ENCODE measurements at regions of chr17 and their contacts with region 1.

Region 1: GRCh38 chr17:77869665-77870132 is 88.8 kb upstream of the TNRC6C start:
- DNase-seq: peak; percentile 97
- ATAC-seq: peak; percentile 94
- H3K4me3 ChIP-seq: peak overlapping the region; percentile 20 to 38 (median 27)
- H3K4me3 Mint-ChIP-seq: peak overlapping the region; percentile 69
- H3K27ac ChIP-seq: peak overlapping the region; percentile 52 to 77
- H3K27ac Mint-ChIP-seq: peak overlapping the region; percentile 83
- H3K4me1 ChIP-seq: peaks cover 48 to 63% of the 10 kb centered on the region in 2 donors
- H3K4me1 Mint-ChIP-seq: peaks cover 66% of the 10 kb centered on the region
- H3K27me3 ChIP-seq: peaks cover 0 to 11% (median 4%) of the 10 kb centered on the region in 4 experiments
- H3K27me3 Mint-ChIP-seq: peaks cover 13% of the 10 kb centered on the region
- CTCF ChIP-seq: no peak

Region 2: DNA sequence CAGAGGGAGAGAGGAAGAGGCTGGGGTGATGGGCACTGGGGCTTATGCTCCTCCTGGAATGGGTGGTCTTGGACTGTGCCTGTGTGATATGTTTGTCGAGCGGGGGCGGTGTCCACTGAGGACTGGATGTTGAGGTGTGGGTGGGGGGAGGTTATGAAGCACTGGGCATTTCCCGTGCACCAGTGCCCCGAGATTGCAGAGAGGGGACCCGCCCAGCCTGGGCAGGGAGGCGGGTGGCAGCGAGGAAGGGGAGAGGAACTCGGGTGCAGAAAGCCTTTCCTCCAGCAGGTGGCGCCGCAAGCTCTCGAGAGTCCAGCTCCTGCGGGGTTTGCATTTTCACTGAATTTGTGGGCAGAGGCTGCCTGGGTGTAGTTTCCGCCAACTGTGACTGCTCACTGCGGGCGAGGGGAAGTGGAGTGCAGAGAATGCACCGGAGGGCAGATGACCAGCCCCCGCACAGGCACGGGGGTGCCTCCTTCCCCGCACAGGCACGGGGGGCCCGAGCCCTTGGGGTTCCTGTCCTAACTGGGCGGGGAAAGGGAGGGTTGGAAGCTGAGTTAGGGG is 538.3 kb before region 1 on chr17:
- CTCF ChIA-PET with region 1: no interaction called
- POLR2A ChIA-PET with region 1: no interaction called
- intact Hi-C with region 1: loop called (anchors 5 kb)
- DNase-seq: peak; percentile 94
- ATAC-seq: peak; percentile 89
- H3K4me3 ChIP-seq: peak overlapping the region in 4 of 5 experiments; percentile 21 to 65 (median 36)
- H3K4me3 Mint-ChIP-seq: peak overlapping the region; percentile 82
- H3K27ac ChIP-seq: peak overlapping the region; percentile 67 to 77
- H3K27ac Mint-ChIP-seq: peak overlapping the region; percentile 85
- H3K4me1 ChIP-seq: peaks cover 41 to 66% of the 10 kb centered on the region in 2 donors
- H3K4me1 Mint-ChIP-seq: peaks cover 53% of the 10 kb centered on the region
- H3K27me3 ChIP-seq: no peaks in the 10 kb centered on the region
- H3K27me3 Mint-ChIP-seq: no peaks in the 10 kb centered on the region
- CTCF ChIP-seq: peak; percentile 93

Region 3: DNA sequence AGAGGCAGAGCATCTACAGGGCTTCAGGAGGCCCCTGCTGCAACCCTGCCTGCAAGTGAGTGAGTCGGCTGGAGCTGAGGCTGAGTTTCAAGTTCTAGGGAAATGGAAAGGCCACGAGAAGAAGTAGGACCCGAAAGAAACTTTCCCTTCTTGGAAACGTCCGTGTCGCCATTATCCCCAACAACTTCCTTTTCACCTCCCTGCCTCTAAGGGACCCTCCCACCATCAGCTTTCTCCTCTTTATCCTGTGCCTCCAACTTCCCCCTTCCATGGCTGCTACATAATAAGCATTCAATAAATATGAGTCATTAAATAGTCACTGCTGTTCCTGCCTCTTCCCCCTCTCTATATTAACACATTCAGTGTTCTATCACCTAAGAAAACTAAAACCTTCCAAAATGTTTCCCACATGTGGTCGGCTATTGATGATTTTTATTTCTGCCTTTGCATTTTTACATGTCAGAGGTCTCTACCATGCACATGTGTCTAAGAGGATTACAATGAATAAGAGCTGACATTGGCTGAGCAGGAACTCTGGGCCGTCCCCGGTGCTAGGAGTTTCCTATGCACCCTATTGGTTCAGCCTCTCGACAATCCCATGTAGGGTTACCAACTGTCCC is 27.1 kb before region 1 on chr17:
- CTCF ChIA-PET with region 1: interaction called, 10 read pairs
- POLR2A ChIA-PET with region 1: interaction called, 12 read pairs
- intact Hi-C with region 1: loop called (anchors 1 kb)
- DNase-seq: no peak
- ATAC-seq: no peak
- H3K4me3 ChIP-seq: no peak overlapping the region
- H3K4me3 Mint-ChIP-seq: no peak overlapping the region
- H3K27ac ChIP-seq: no peak overlapping the region
- H3K27ac Mint-ChIP-seq: no peak overlapping the region
- H3K4me1 ChIP-seq: peaks cover 43 to 62% of the 10 kb centered on the region in 2 donors
- H3K4me1 Mint-ChIP-seq: peaks cover 45% of the 10 kb centered on the region
- H3K27me3 ChIP-seq: peaks cover 0 to 71% (median 25%) of the 10 kb centered on the region in 4 experiments
- H3K27me3 Mint-ChIP-seq: peaks cover 50% of the 10 kb centered on the region
- CTCF ChIP-seq: no peak

Region 4: GRCh38 chr17:77914385-77915254 is 44.9 kb after region 1 on chr17:
- CTCF ChIA-PET with region 1: interaction called, 7 read pairs
- POLR2A ChIA-PET with region 1: interaction called, 5 read pairs
- intact Hi-C with region 1: loop called (anchors 1 kb)
- DNase-seq: peak; percentile 56
- ATAC-seq: no peak
- H3K4me3 ChIP-seq: no peak overlapping the region
- H3K4me3 Mint-ChIP-seq: no peak overlapping the region
- H3K27ac ChIP-seq: no peak overlapping the region
- H3K27ac Mint-ChIP-seq: no peak overlapping the region
- H3K4me1 ChIP-seq: peaks cover 18 to 28% of the 10 kb centered on the region in 2 donors
- H3K4me1 Mint-ChIP-seq: peaks cover 24% of the 10 kb centered on the region
- H3K27me3 ChIP-seq: peaks cover 0 to 51% (median 28%) of the 10 kb centered on the region in 4 experiments
- H3K27me3 Mint-ChIP-seq: peaks cover 66% of the 10 kb centered on the region
- CTCF ChIP-seq: no peak